Heart left ventricle (tissue), 16 donors: ENCODE measurements at regions of chr2 and their contacts with region 1.

Region 1: GRCh38 chr2:70301344-70302194 is at the start of gene FAM136A:
- DNase-seq: peak; percentile 85 to 95 (median 88)
- ATAC-seq: peak; percentile 77 to 96 (median 94)
- H3K4me3 ChIP-seq: peak within 1 kb of the TSS; percentile 67 to 99 (median 88)
- H3K27ac ChIP-seq: peak within 1 kb of the TSS in 11 of 12 donors; percentile 72 to 93 (median 86)
- H3K4me1 ChIP-seq: peaks cover 0 to 16% (median 4%) of the 10 kb centered on the region in 12 donors
- H3K27me3 ChIP-seq: no peaks in the 10 kb centered on the region
- CTCF ChIP-seq: peak; percentile 89 to 99 (median 96)
- POLR2A ChIP-seq: peak in 1 of 2 donors; percentile 56
- total RNA-seq, gene FAM136A: 17.8 to 25.9 (median 23.9) TPM

Region 2: GRCh38 chr2:70086838-70087701 is 214.5 kb before region 1 on chr2 and contains the start of gene PCBP1:
- intact Hi-C with region 1: loop called in 1 of 10 experiments (anchors 10 kb)
- DNase-seq: peak; percentile 97 to 99 (median 97)
- ATAC-seq: peak; percentile 82 to 87 (median 84)
- H3K4me3 ChIP-seq: peak within 1 kb of the TSS; percentile 62 to 97 (median 82)
- H3K27ac ChIP-seq: peak within 1 kb of the TSS; percentile 91 to 100 (median 100)
- H3K4me1 ChIP-seq: peaks cover 0 to 66% (median 41%) of the 10 kb centered on the region in 12 donors
- H3K27me3 ChIP-seq: no peaks in the 10 kb centered on the region
- CTCF ChIP-seq: no peak
- POLR2A ChIP-seq: peak in 1 of 2 donors; percentile 71
- total RNA-seq, gene PCBP1: 106 to 274 (median 199) TPM

Region 3: GRCh38 chr2:70248181-70248847 is 53.3 kb before region 1 on chr2 and contains the start of gene TIA1:
- intact Hi-C with region 1: loop called in 2 of 10 experiments (anchors 5 kb)
- DNase-seq: peak; percentile 98 to 99 (median 99)
- ATAC-seq: peak; percentile 98 to 99 (median 98)
- H3K4me3 ChIP-seq: peak within 1 kb of the TSS; percentile 52 to 98 (median 82)
- H3K27ac ChIP-seq: peak within 1 kb of the TSS; percentile 91 to 99 (median 96)
- H3K4me1 ChIP-seq: peaks cover 2 to 44% (median 33%) of the 10 kb centered on the region in 12 donors
- H3K27me3 ChIP-seq: no peaks in the 10 kb centered on the region
- CTCF ChIP-seq: no peak
- POLR2A ChIP-seq: peak; percentile 23 to 86
- total RNA-seq, gene TIA1: 26.1 to 53.0 (median 42.1) TPM

Region 4: DNA sequence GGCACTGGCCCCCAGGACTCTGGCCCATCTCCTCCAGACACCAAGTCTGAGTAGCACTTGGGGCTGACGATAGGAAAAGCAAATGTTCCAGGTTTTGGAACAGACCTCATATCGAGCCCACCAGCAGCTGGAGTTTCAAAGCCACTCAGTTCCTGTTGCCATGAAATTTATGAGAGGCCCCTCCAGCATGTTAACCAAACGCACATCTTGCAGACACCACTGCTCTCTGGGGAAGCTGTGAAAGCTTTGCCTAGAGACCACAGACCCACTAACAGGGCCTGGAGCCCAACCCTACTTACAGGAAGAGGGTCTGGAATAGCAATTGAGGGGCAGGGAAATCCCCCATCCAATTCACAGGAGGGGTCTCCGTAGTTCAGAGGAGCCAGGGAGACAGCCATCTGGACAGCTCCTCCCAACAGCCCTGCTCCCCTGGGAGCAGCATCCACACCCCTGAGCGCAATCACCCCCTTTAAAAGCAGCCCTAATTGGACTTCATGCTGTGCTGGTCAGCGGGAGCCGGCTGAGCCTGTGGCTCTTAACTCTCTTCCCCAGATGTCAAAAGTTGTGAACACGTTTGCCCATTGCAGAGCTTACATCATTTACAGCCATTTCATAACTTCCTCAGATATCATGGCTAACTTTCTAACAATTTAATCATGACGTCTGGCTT is 170.8 kb after region 1 on chr2:
- intact Hi-C with region 1: no loop called
- DNase-seq: no peak
- ATAC-seq: peak in 1 of 4 donors; percentile 31
- H3K4me3 ChIP-seq: no peak overlapping the region
- H3K27ac ChIP-seq: peak overlapping the region in 1 of 12 donors; percentile 55
- H3K4me1 ChIP-seq: peaks cover 0 to 66% (median 0%) of the 10 kb centered on the region in 12 donors
- H3K27me3 ChIP-seq: peaks cover 0 to 14% (median 0%) of the 10 kb centered on the region in 9 donors
- CTCF ChIP-seq: no peak
- POLR2A ChIP-seq: no peak

Region 5: GRCh38 chr2:70616168-70616694 is 314.7 kb after region 1 on chr2:
- intact Hi-C with region 1: loop called in 5 of 10 experiments (anchors 2 to 5 kb)
- DNase-seq: no peak
- ATAC-seq: no peak
- H3K4me3 ChIP-seq: no peak overlapping the region
- H3K27ac ChIP-seq: no peak overlapping the region
- H3K4me1 ChIP-seq: peaks cover 0 to 4% (median 0%) of the 10 kb centered on the region in 12 donors
- H3K27me3 ChIP-seq: peaks cover 0 to 16% (median 0%) of the 10 kb centered on the region in 9 donors
- CTCF ChIP-seq: no peak
- POLR2A ChIP-seq: no peak